ENCODE measurements at regions of chr2 and their contacts with region 1.

Region 1: DNA sequence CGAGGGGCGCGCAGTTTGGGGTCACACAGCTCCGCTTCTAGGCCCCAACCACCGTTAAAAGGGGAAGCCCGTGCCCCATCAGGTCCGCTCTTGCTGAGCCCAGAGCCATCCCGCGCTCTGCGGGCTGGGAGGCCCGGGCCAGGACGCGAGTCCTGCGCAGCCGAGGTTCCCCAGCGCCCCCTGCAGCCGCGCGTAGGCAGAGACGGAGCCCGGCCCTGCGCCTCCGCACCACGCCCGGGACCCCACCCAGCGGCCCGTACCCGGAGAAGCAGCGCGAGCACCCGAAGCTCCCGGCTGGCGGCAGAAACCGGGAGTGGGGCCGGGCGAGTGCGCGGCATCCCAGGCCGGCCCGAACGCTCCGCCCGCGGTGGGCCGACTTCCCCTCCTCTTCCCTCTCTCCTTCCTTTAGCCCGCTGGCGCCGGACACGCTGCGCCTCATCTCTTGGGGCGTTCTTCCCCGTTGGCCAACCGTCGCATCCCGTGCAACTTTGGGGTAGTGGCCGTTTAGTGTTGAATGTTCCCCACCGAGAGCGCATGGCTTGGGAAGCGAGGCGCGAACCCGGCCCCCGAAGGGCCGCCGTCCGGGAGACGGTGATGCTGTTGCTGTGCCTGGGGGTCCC is at the start of gene ITGA4:
- DNase-seq: peak; percentile 97
- H3K4me3 Mint-ChIP-seq: peak within 1 kb of the TSS; percentile 89
- H3K27ac Mint-ChIP-seq: peak within 1 kb of the TSS; percentile 93
- H3K4me1 Mint-ChIP-seq: peaks cover 45% of the 10 kb centered on the region
- H3K27me3 Mint-ChIP-seq: no peaks in the 10 kb centered on the region
- total RNA-seq, gene ITGA4: 106 and 109 TPM in 2 replicates

Region 2: DNA sequence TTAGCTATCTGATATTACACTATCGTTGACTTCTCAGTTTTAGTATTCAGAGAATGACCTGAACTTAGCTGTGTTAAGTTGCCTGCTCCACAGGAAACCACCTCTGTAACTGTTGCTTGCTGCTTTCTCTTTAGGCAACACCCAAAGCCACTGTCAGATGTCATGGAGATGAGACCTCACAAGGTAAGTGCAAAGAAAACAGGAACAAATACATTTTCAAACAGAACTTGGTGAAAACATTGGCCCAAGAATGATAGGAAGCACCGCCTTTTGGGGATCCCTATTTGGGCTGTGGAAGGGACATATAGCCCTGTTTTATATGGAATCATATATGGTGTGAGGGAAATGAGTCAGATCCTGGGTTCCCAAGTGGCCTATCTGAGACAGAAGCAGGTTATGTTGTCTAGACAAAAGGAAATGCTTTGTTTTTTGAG is 333.4 kb before region 1 on chr2:
- intact Hi-C with region 1: loop called (anchors 1 kb)
- DNase-seq: peak; percentile 93
- H3K4me3 Mint-ChIP-seq: peak overlapping the region; percentile 70
- H3K27ac Mint-ChIP-seq: peak overlapping the region; percentile 90
- H3K4me1 Mint-ChIP-seq: peaks cover 55% of the 10 kb centered on the region
- H3K27me3 Mint-ChIP-seq: no peaks in the 10 kb centered on the region

Region 3: GRCh38 chr2:181223234-181223633 is 234.0 kb before region 1 on chr2:
- intact Hi-C with region 1: loop called (anchors 5 kb)
- DNase-seq: peak; percentile 59
- H3K4me3 Mint-ChIP-seq: peak overlapping the region; percentile 71
- H3K27ac Mint-ChIP-seq: peak overlapping the region; percentile 96
- H3K4me1 Mint-ChIP-seq: peaks cover 29% of the 10 kb centered on the region
- H3K27me3 Mint-ChIP-seq: no peaks in the 10 kb centered on the region

Region 4: DNA sequence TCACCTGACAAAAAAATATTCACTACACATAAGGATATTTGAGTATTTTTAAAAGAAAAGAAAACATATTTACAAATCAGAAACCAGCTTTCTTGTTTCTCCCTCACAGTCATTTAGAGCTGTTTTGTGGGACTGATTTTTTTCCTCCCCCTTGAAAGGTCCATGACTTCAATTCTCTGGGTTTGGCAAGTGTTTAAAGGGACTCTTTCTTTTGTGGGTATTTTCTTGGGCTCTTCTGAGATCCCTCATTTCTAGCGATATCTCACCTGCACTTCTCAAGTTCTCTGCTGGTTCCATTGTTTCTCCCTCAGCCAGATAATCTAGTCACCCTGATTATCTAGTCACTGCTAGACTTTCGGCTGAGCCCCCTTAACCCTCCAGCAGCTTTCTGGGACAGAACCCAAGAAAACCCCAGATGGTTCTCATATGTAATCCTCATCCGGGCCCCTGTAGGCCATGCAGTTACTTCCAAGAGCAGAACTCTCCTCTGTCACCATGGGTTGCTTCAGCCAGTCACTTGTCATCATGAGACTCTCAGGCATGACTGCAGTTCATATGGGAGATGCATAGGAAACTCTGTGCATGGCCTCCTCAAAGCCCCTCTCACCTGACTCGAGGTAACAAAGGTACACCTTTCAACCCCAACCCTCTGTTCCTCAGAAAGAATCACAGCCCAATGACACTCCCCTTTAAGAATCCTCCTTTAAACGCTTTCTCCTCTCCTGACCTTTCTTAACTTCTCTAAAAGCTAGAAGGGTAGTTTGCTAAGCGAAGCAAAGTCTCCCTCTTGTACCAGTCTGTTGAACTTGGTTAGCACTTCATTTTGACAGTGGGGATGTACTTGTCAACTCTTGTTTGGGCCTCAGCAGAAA is 36.7 kb before region 1 on chr2:
- intact Hi-C with region 1: loop called (anchors 5 kb)
- DNase-seq: no peak
- H3K4me3 Mint-ChIP-seq: peak overlapping the region; percentile 15
- H3K27ac Mint-ChIP-seq: peak overlapping the region; percentile 62
- H3K4me1 Mint-ChIP-seq: peaks cover 20% of the 10 kb centered on the region
- H3K27me3 Mint-ChIP-seq: no peaks in the 10 kb centered on the region

Region 5: DNA sequence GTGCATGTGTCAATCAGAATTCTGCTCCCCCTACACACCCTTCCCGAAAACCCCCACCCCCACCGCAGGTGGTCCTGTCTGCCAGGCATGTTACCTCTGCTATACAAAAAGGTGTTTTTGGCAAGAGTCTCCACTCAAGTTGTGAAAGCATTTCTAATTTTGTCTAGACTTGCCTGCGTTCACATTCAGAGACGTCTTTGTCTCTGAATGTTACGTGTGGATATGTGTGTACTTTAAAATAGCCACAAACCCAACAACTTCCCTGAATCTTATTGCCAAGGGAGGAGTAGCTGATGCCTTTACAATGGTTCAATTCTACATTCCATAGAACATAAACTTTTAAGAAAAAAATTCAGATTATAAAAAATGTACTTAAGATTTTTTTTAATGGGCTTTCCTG is 66.5 kb after region 1 on chr2:
- intact Hi-C with region 1: no loop called
- DNase-seq: no peak
- H3K4me3 Mint-ChIP-seq: no peak overlapping the region
- H3K27ac Mint-ChIP-seq: no peak overlapping the region
- H3K4me1 Mint-ChIP-seq: peaks cover 2% of the 10 kb centered on the region
- H3K27me3 Mint-ChIP-seq: no peaks in the 10 kb centered on the region

Region 6: DNA sequence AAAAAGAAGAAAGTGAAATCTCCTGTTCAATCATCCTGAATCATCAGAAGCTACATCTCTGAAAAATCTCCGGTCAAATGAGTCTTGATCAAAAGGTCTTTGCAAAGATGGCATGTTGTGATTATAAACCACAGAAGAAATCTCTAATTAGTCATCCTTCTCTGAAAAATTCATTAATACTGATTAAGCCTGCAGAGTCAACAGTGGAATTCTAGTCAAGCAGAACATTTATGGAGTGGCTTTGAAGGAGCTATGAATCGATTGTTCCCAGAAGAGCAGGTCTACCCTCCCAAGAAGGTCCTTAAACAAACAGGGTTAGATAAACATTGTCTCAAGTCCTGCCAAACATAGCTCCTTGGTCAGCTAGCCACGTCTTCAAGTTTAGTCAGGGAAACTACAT is 88.8 kb after region 1 on chr2:
- intact Hi-C with region 1: no loop called
- DNase-seq: no peak
- H3K4me3 Mint-ChIP-seq: no peak overlapping the region
- H3K27ac Mint-ChIP-seq: no peak overlapping the region
- H3K4me1 Mint-ChIP-seq: no peaks in the 10 kb centered on the region
- H3K27me3 Mint-ChIP-seq: no peaks in the 10 kb centered on the region

Region 7: DNA sequence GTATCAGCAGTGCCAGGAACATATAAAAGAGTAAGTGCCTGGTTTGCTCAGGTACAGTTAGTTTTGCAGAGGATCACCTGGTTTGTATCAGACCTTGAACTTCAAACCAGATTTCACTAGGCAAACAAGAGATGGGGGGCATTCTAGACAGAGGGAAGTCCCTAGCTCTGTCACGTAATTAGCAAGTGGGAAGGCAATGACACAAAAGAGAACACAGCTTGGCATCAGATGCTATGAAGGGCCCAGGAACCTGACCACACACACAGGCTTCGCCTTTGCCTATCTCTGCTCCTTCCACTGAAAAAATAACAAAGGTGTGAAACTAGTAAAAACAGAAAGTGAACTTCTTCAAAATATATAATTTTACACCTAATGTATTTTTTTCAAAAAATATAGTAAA is 137.1 kb after region 1 on chr2:
- intact Hi-C with region 1: no loop called
- DNase-seq: no peak
- H3K4me3 Mint-ChIP-seq: no peak overlapping the region
- H3K27ac Mint-ChIP-seq: no peak overlapping the region
- H3K4me1 Mint-ChIP-seq: no peaks in the 10 kb centered on the region
- H3K27me3 Mint-ChIP-seq: peaks cover 26% of the 10 kb centered on the region

Region 8: GRCh38 chr2:181790716-181791649 is 333.8 kb after region 1 on chr2:
- intact Hi-C with region 1: loop called (anchors 10 kb)
- DNase-seq: peak; percentile 62
- H3K4me3 Mint-ChIP-seq: peak overlapping the region; percentile 28
- H3K27ac Mint-ChIP-seq: peak overlapping the region; percentile 79
- H3K4me1 Mint-ChIP-seq: peaks cover 25% of the 10 kb centered on the region
- H3K27me3 Mint-ChIP-seq: no peaks in the 10 kb centered on the region

Region 9: DNA sequence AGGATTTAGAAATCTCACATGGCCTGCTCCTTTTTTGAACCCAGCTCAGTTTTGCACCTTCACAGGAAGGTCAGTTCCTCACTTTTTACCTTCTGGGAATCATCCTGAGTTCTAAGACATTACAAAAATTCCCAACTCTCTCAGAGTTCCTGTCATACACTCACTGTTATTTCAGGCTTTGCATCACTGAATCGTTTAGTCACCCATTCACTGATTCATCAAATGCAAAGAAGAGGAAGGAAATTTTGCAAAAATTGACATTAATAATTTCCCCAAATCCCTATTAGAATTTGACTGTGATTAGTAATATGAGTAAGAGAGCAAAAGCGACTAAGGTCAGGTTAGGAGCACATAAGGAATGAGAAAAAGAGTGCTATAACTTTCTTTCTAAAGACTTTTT is 772.1 kb after region 1 on chr2:
- intact Hi-C with region 1: no loop called
- DNase-seq: no peak
- H3K4me3 Mint-ChIP-seq: no peak overlapping the region
- H3K27ac Mint-ChIP-seq: no peak overlapping the region
- H3K4me1 Mint-ChIP-seq: no peaks in the 10 kb centered on the region
- H3K27me3 Mint-ChIP-seq: peaks cover 2% of the 10 kb centered on the region

Measured in activated CD4-positive, alpha-beta T cell treated with anti-CD3 and anti-CD28 coated beads, Interleukin-2, amount 10 ng/mL, durations not matched to agents 24 days and 14 days (primary cell).